Activated CD8-positive, alpha-beta memory T cell treated with anti-CD3 and anti-CD28 coated beads, Interleukin-2, amount 10 ng/mL, durations not matched to agents 7 days and 5 days (primary cell): ENCODE measurements at regions of chr12 and their contacts with region 1.

Region 1: DNA sequence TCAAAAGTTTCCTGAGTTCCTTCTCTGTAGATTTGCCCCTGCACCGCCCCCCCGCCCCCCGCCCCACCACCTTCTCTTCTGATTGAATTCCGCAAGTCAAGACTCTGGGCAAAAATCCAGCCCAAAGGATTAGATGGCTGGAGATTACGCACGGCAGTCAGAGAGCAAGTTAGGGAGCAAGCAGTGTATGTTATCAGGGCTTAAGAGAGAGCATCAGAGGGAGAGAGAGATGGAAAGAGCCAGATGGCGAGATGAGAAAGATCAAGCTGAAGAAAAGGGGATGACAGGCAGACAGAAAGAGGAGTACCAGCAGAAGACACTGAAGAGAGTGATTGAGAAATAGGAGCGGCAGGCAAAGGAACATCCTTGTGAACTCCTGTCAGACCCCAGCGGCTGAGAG is 13.9 kb upstream of the ANKRD33 start:
- DNase-seq: no peak
- ATAC-seq: no peak
- H3K4me3 Mint-ChIP-seq: no peak overlapping the region
- H3K27ac Mint-ChIP-seq: no peak overlapping the region
- H3K4me1 Mint-ChIP-seq: peaks cover 3% of the 10 kb centered on the region
- H3K27me3 Mint-ChIP-seq: peaks cover 28% of the 10 kb centered on the region

Region 2: GRCh38 chr12:51823875-51824565 is 50.0 kb before region 1 on chr12:
- CTCF ChIA-PET with region 1: interaction called, 11 read pairs
- DNase-seq: no peak
- ATAC-seq: no peak
- H3K4me3 Mint-ChIP-seq: no peak overlapping the region
- H3K27ac Mint-ChIP-seq: no peak overlapping the region
- H3K4me1 Mint-ChIP-seq: peaks cover 25% of the 10 kb centered on the region
- H3K27me3 Mint-ChIP-seq: no peaks in the 10 kb centered on the region

Region 3: GRCh38 chr12:51855596-51856428 is 18.2 kb before region 1 on chr12:
- CTCF ChIA-PET with region 1: no interaction called
- DNase-seq: no peak
- ATAC-seq: no peak
- H3K4me3 Mint-ChIP-seq: no peak overlapping the region
- H3K27ac Mint-ChIP-seq: no peak overlapping the region
- H3K4me1 Mint-ChIP-seq: peaks cover 10% of the 10 kb centered on the region
- H3K27me3 Mint-ChIP-seq: peaks cover 30% of the 10 kb centered on the region

Region 4: GRCh38 chr12:51886021-51886322 is 12.0 kb after region 1 on chr12:
- CTCF ChIA-PET with region 1: interaction called, 16 read pairs
- DNase-seq: peak; percentile 74
- ATAC-seq: peak; percentile 97
- H3K4me3 Mint-ChIP-seq: no peak overlapping the region
- H3K27ac Mint-ChIP-seq: peak overlapping the region; percentile 82
- H3K4me1 Mint-ChIP-seq: peaks cover 11% of the 10 kb centered on the region
- H3K27me3 Mint-ChIP-seq: no peaks in the 10 kb centered on the region

Region 5: DNA sequence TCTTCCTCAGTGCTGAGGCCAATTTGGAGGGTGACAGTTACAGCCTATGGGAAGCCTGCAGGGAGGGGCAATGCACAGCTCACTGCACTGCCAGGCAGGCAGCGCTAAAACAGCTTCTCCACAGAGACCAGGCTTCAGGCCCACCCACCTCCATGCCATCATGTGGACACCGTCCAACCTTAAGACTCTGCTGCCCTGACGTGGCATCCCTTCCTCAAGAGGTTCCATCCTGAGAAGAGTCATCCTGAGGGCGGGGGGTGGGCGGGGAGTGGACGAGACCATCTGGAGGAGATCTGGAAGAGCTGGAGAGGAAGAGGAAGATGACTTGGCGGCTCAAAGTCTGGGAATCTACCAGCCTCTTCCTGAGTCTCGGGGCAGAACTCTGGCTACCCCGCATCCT is 24.9 kb after region 1 on chr12:
- CTCF ChIA-PET with region 1: no interaction called
- DNase-seq: no peak
- ATAC-seq: no peak
- H3K4me3 Mint-ChIP-seq: no peak overlapping the region
- H3K27ac Mint-ChIP-seq: no peak overlapping the region
- H3K4me1 Mint-ChIP-seq: no peaks in the 10 kb centered on the region
- H3K27me3 Mint-ChIP-seq: peaks cover 3% of the 10 kb centered on the region